ENCODE measurements at regions of chrX and their contacts with region 1.

Region 1: GRCh38 chrX:102085706-102086105 is 39.8 kb upstream of the TCEAL2 start:
- DNase-seq: no peak
- ATAC-seq: no peak
- H3K4me3 ChIP-seq: no peak overlapping the region
- H3K4me3 Mint-ChIP-seq: no peak overlapping the region
- H3K27ac ChIP-seq: no peak overlapping the region
- H3K27ac Mint-ChIP-seq: no peak overlapping the region
- H3K4me1 ChIP-seq: no peaks in the 10 kb centered on the region
- H3K4me1 Mint-ChIP-seq: no peaks in the 10 kb centered on the region
- H3K27me3 ChIP-seq: no peaks in the 10 kb centered on the region
- H3K27me3 Mint-ChIP-seq: peaks cover 4 to 18% (median 6%) of the 10 kb centered on the region in 5 donors

Region 2: DNA sequence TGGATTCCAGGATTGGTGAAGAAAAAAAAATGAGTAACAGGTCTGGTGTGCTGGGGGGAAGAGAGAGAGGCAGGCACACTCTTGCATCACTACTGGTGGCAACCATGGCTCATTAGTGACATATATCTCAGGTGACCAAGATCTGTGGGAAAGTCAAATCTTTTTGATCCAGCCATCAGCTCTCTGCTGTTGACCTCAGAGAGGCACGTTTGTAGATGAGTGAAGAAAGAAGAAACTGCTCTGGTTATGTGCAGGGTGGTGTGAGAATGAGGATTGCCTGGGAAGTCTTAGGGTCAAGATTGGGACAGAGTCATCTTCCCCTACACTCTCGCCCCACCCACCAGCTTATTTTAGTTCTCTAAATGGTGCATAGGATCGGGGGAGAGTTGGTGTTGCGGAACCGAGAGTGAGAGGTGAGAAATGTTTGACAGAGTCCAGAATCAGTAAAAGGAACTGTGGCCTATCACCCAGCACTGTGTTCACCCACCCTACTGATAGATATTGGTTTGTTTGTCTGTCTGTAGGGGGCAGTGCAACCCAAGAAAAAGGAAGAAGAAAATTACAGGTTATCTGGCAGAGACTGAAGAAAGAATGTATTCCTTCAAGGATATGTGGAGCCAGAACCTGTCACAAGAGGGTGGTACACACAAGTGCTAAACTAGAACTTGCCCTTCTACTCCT is 489.8 kb before region 1 on chrX:
- CTCF ChIA-PET with region 1: no interaction called
- POLR2A ChIA-PET with region 1: no interaction called
- intact Hi-C with region 1: loop called in 1 of 2 experiments (anchors 5 kb)
- DNase-seq: peak in 7 of 9 donors; percentile 32 to 70 (median 54)
- ATAC-seq: peak; percentile 86
- H3K4me3 ChIP-seq: no peak overlapping the region
- H3K4me3 Mint-ChIP-seq: no peak overlapping the region
- H3K27ac ChIP-seq: no peak overlapping the region
- H3K27ac Mint-ChIP-seq: no peak overlapping the region
- H3K4me1 ChIP-seq: no peaks in the 10 kb centered on the region
- H3K4me1 Mint-ChIP-seq: no peaks in the 10 kb centered on the region
- H3K27me3 ChIP-seq: no peaks in the 10 kb centered on the region
- H3K27me3 Mint-ChIP-seq: peaks cover 7 to 22% (median 12%) of the 10 kb centered on the region in 5 donors

Region 3: GRCh38 chrX:101823236-101823635 is 262.5 kb before region 1 on chrX:
- CTCF ChIA-PET with region 1: no interaction called
- POLR2A ChIA-PET with region 1: no interaction called
- intact Hi-C with region 1: no loop called
- DNase-seq: no peak
- ATAC-seq: no peak
- H3K4me3 ChIP-seq: no peak overlapping the region
- H3K4me3 Mint-ChIP-seq: no peak overlapping the region
- H3K27ac ChIP-seq: no peak overlapping the region
- H3K27ac Mint-ChIP-seq: no peak overlapping the region
- H3K4me1 ChIP-seq: no peaks in the 10 kb centered on the region
- H3K4me1 Mint-ChIP-seq: no peaks in the 10 kb centered on the region
- H3K27me3 ChIP-seq: no peaks in the 10 kb centered on the region
- H3K27me3 Mint-ChIP-seq: peaks cover 0 to 9% (median 8%) of the 10 kb centered on the region in 5 donors

Region 4: GRCh38 chrX:102129473-102129872 is 43.8 kb after region 1 on chrX:
- CTCF ChIA-PET with region 1: no interaction called
- POLR2A ChIA-PET with region 1: no interaction called
- intact Hi-C with region 1: no loop called
- DNase-seq: no peak
- ATAC-seq: no peak
- H3K4me3 ChIP-seq: no peak overlapping the region
- H3K4me3 Mint-ChIP-seq: no peak overlapping the region
- H3K27ac ChIP-seq: no peak overlapping the region
- H3K27ac Mint-ChIP-seq: no peak overlapping the region
- H3K4me1 ChIP-seq: no peaks in the 10 kb centered on the region
- H3K4me1 Mint-ChIP-seq: peaks cover 0 to 9% (median 5%) of the 10 kb centered on the region in 7 donors
- H3K27me3 ChIP-seq: no peaks in the 10 kb centered on the region
- H3K27me3 Mint-ChIP-seq: peaks cover 18 to 39% (median 31%) of the 10 kb centered on the region in 5 donors

Measured in naive thymus-derived CD4-positive, alpha-beta T cell (primary cell).